Activated T-helper 2 cell treated with anti-CD3 and anti-CD28 coated beads, Interferon-gamma antibody, Interleukin-2, Interleukin-4, amounts not matched to agents 10 μg/mL and 5 μg/mL and 100 μg/mL, durations not matched to agents 14 hours and 24 hours and 36 hours (primary cell): ENCODE measurements at regions of chr20 and their contacts with region 1.

Region 1: DNA sequence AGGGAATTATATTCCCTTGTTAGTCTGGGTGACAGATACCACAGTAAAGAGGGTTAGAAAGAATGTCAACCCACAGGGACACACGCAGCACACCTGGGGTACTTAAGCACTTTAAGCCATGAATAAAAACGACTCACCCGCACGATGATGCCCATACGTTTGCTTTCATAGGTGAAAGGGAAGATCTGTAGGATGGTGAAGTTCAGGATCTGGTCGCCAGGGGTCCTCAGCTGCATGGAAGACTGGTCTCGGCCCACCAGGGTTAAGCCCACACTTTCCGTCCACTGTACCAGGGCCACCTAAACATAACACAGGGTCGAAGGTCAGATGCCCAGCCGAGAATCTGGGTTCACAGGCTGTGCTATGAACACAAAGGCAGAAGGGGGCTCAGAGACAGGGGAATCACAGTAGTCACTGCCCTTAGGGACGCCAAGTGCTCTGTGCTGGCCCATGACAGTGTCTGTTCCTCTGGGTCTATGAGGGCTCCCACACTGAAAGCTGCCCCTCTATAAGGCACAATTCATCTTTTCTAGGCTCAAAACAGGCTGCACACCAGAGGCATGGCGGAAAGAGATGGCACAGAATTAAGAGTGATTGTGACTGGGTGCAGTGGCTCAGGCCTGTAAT is 96.8 kb upstream of the NFATC2 start:
- DNase-seq: peak; percentile 28
- H3K4me3 Mint-ChIP-seq: no peak overlapping the region
- H3K27ac Mint-ChIP-seq: no peak overlapping the region
- H3K4me1 Mint-ChIP-seq: peaks cover 13% of the 10 kb centered on the region
- H3K27me3 Mint-ChIP-seq: peaks cover 2% of the 10 kb centered on the region

Region 2: GRCh38 chr20:51661609-51662178 is 22.4 kb after region 1 on chr20:
- intact Hi-C with region 1: loop called (anchors 2 kb)
- DNase-seq: peak; percentile 32
- H3K4me3 Mint-ChIP-seq: no peak overlapping the region
- H3K27ac Mint-ChIP-seq: peak overlapping the region; percentile 20
- H3K4me1 Mint-ChIP-seq: peaks cover 23% of the 10 kb centered on the region
- H3K27me3 Mint-ChIP-seq: peaks cover 4% of the 10 kb centered on the region

Region 3: GRCh38 chr20:51966291-51966971 is 327.1 kb after region 1 on chr20:
- intact Hi-C with region 1: loop called (anchors 1 kb)
- DNase-seq: no peak
- H3K4me3 Mint-ChIP-seq: no peak overlapping the region
- H3K27ac Mint-ChIP-seq: no peak overlapping the region
- H3K4me1 Mint-ChIP-seq: no peaks in the 10 kb centered on the region
- H3K27me3 Mint-ChIP-seq: peaks cover 5% of the 10 kb centered on the region

Region 4: DNA sequence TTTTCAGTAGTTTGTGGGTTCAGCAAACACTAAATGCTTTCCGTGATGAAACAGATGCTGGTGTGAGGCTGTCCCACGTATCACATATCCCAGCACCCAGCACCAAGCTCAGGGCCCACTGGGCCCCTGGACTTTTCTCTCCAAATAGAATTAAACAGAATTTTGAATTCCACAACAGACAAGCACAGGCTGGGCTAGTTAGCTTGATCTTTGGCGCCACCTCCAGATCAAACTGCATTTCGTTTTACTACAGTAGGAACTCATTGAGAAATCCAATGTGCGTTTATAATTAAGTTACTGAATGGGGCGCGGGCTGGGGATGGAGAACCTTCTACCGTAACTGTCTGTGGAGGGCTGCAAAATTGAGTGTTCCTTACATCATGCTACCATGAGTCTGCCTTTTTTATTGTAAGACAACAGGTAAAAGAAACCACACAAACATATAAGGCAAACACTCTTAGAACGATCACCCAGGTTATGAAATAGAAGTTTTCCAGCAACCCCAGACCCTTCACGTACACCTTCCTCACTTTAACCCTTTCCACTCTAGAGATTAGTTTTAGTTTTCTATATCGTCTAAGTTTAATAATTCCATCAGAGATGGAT is 444.4 kb after region 1 on chr20:
- intact Hi-C with region 1: loop called (anchors 1 kb)
- DNase-seq: no peak
- H3K4me3 Mint-ChIP-seq: no peak overlapping the region
- H3K27ac Mint-ChIP-seq: no peak overlapping the region
- H3K4me1 Mint-ChIP-seq: peaks cover 12% of the 10 kb centered on the region
- H3K27me3 Mint-ChIP-seq: no peaks in the 10 kb centered on the region